CD8-positive, alpha-beta T cell (primary cell): ENCODE measurements at regions of chr12 and their contacts with region 1.

Region 1: GRCh38 chr12:108633534-108634248 is at the start of gene SELPLG:
- DNase-seq: peak; percentile 77 to 97 (median 88)
- ATAC-seq: peak; percentile 60
- H3K4me3 ChIP-seq: peak within 1 kb of the TSS; percentile 71 to 95
- H3K4me3 Mint-ChIP-seq: peak within 1 kb of the TSS; percentile 100
- H3K27ac ChIP-seq: peak within 1 kb of the TSS; percentile 91 to 92
- H3K27ac Mint-ChIP-seq: peak within 1 kb of the TSS; percentile 100
- H3K4me1 ChIP-seq: peaks cover 73% of the 10 kb centered on the region
- H3K4me1 Mint-ChIP-seq: peaks cover 71% of the 10 kb centered on the region
- H3K27me3 ChIP-seq: no peaks in the 10 kb centered on the region
- H3K27me3 Mint-ChIP-seq: no peaks in the 10 kb centered on the region
- CTCF ChIP-seq: peak; percentile 23
- total RNA-seq, gene SELPLG: 30.4 to 32.3 TPM

Region 2: GRCh38 chr12:108570743-108571608 is 62.7 kb before region 1 on chr12:
- CTCF ChIA-PET with region 1: interaction called, 155 read pairs
- POLR2A ChIA-PET with region 1: interaction called, 11 read pairs
- intact Hi-C with region 1: no loop called
- DNase-seq: peak in 3 of 9 experiments; percentile 23 to 54 (median 47)
- ATAC-seq: no peak
- H3K4me3 ChIP-seq: no peak overlapping the region
- H3K4me3 Mint-ChIP-seq: no peak overlapping the region
- H3K27ac ChIP-seq: peak overlapping the region in 1 of 2 experiments; percentile 5
- H3K27ac Mint-ChIP-seq: peak overlapping the region; percentile 97
- H3K4me1 ChIP-seq: peaks cover 53% of the 10 kb centered on the region
- H3K4me1 Mint-ChIP-seq: peaks cover 89% of the 10 kb centered on the region
- H3K27me3 ChIP-seq: no peaks in the 10 kb centered on the region
- H3K27me3 Mint-ChIP-seq: no peaks in the 10 kb centered on the region
- CTCF ChIP-seq: no peak

Region 3: GRCh38 chr12:108649669-108650068 is 16.0 kb after region 1 on chr12:
- CTCF ChIA-PET with region 1: interaction called, 79 read pairs
- POLR2A ChIA-PET with region 1: interaction called, 35 read pairs
- intact Hi-C with region 1: loop called in 1 of 2 experiments (anchors 1 kb)
- DNase-seq: no peak
- ATAC-seq: no peak
- H3K4me3 ChIP-seq: no peak overlapping the region
- H3K4me3 Mint-ChIP-seq: no peak overlapping the region
- H3K27ac ChIP-seq: no peak overlapping the region
- H3K27ac Mint-ChIP-seq: no peak overlapping the region
- H3K4me1 ChIP-seq: peaks cover 24% of the 10 kb centered on the region
- H3K4me1 Mint-ChIP-seq: peaks cover 29% of the 10 kb centered on the region
- H3K27me3 ChIP-seq: no peaks in the 10 kb centered on the region
- H3K27me3 Mint-ChIP-seq: no peaks in the 10 kb centered on the region
- CTCF ChIP-seq: no peak

Region 4: GRCh38 chr12:108731105-108731865 is 97.6 kb after region 1 on chr12 and contains the start of gene CORO1C:
- CTCF ChIA-PET with region 1: interaction called, 3 read pairs
- POLR2A ChIA-PET with region 1: interaction called, 7 read pairs
- intact Hi-C with region 1: loop called (anchors 2 to 10 kb)
- DNase-seq: peak; percentile 86 to 97 (median 92)
- ATAC-seq: peak; percentile 75
- H3K4me3 ChIP-seq: peak within 1 kb of the TSS; percentile 91 to 93
- H3K4me3 Mint-ChIP-seq: peak within 1 kb of the TSS; percentile 94
- H3K27ac ChIP-seq: peak within 1 kb of the TSS; percentile 67 to 85
- H3K27ac Mint-ChIP-seq: peak within 1 kb of the TSS; percentile 86
- H3K4me1 ChIP-seq: peaks cover 7% of the 10 kb centered on the region
- H3K4me1 Mint-ChIP-seq: peaks cover 26% of the 10 kb centered on the region
- H3K27me3 ChIP-seq: no peaks in the 10 kb centered on the region
- H3K27me3 Mint-ChIP-seq: no peaks in the 10 kb centered on the region
- CTCF ChIP-seq: peak; percentile 74
- total RNA-seq, gene CORO1C: 10.3 to 15.4 TPM

Region 5: DNA sequence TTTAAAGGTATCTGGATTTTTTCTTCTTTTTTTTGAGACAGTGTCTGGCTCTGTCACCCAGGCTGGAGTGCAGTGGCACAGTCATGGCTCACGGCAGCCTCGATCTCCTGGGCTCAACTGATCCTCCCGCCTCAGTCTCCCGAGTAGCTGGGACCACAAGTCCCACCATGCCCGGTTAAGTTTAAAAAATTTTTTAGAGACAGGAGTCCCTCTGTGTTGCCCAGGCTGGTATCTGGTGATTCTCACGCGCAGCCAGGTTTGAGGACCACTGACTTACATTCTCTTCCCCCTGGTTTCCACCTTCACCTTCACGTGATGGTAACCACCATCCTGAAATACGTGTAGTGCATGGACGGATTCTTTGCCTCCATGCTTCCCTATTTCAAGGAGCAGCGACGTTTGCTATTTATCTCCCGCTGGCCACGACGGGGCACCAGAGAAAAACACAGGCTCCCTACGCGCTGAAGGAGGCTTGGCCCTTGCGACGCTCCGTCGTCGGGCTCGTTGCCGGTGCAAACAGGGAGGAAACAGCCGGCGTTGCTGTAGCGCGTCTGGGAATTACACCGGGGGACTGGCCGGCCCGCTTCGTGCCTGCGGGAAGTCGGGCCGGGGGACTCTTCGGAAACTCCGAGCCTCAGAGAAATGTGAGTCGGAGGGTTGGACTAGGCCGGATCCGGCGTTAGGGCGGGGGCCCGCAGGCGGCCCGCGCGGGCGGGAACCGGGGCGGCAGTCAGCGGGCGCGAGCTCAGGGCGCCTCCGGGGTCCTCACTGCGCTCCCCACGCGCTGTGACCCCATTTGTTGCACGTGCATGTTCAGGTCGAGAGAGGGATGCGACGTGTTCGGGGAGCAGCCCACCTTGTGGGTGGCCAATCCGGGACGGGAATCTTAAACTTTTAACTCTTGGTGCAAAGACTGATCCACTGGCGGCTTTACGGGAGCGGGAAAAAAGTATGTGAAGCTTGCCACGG is 1266.4 kb after region 1 on chr12 and contains the start of gene TCHP:
- CTCF ChIA-PET with region 1: no interaction called
- POLR2A ChIA-PET with region 1: no interaction called
- intact Hi-C with region 1: loop called in 1 of 2 experiments (anchors 5 kb)
- DNase-seq: peak; percentile 35 to 91 (median 72)
- ATAC-seq: peak; percentile 90
- H3K4me3 ChIP-seq: peak within 1 kb of the TSS; percentile 79 to 86
- H3K4me3 Mint-ChIP-seq: peak within 1 kb of the TSS; percentile 95
- H3K27ac ChIP-seq: peak within 1 kb of the TSS; percentile 65 to 69
- H3K27ac Mint-ChIP-seq: peak within 1 kb of the TSS; percentile 97
- H3K4me1 ChIP-seq: peaks cover 17% of the 10 kb centered on the region
- H3K4me1 Mint-ChIP-seq: peaks cover 28% of the 10 kb centered on the region
- H3K27me3 ChIP-seq: no peaks in the 10 kb centered on the region
- H3K27me3 Mint-ChIP-seq: no peaks in the 10 kb centered on the region
- CTCF ChIP-seq: no peak
- total RNA-seq, gene TCHP: 11.4 to 15.7 TPM